CD14-positive monocyte (primary cell): ENCODE measurements at regions of chr2 and their contacts with region 1.

Region 1: DNA sequence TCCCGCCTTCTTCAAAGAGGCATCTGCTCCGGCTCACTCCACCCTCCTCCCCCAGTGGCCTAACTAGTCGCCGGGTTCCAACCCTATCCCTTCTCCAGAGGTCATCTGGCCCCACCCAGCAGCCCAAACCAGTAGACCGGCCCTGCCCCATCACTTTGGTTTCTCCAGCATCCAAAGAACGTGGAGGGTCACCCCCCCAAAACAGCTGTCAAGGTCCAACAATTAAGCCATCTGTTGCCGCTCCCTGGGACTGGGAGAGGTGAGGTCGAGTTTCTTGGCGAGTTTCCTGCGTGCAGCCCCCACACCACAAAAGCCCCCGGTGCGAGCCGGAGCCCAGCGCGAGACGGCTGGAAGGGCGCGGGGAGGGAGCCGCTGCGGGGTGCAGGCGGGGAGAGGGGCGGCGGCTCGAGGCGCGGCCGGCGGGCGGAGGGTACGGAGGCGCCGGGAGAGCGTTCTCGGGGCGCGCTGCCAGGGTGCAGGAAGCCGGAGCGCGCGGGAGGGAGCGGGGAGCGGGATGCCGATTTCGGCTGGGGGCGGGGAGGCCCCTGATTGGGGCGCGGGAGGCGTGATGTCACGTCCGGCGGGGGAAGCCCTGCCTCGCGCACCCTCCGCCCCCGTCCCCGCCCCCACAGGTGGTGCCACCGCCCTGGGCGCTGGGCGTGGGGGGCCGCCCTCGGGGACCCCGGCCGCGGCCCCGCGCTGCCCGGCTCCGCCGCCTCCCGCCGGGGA is 571 bp upstream of the GPC1 start:
- DNase-seq: peak; percentile 10 to 24 (median 14)
- H3K4me3 ChIP-seq: peak overlapping the region in 1 of 3 experiments; percentile 60
- H3K4me3 Mint-ChIP-seq: peak overlapping the region; percentile 75 to 87
- H3K27ac ChIP-seq: no peak overlapping the region
- H3K27ac Mint-ChIP-seq: peak overlapping the region in 1 of 7 donors; percentile 46
- H3K4me1 ChIP-seq: peaks cover 0 to 17% of the 10 kb centered on the region in 2 donors
- H3K4me1 Mint-ChIP-seq: peaks cover 7% of the 10 kb centered on the region
- H3K27me3 ChIP-seq: peaks cover 19 to 39% of the 10 kb centered on the region in 2 donors
- H3K27me3 Mint-ChIP-seq: peaks cover 34 to 65% (median 49%) of the 10 kb centered on the region in 3 donors
- CTCF ChIP-seq: no peak

Region 2: DNA sequence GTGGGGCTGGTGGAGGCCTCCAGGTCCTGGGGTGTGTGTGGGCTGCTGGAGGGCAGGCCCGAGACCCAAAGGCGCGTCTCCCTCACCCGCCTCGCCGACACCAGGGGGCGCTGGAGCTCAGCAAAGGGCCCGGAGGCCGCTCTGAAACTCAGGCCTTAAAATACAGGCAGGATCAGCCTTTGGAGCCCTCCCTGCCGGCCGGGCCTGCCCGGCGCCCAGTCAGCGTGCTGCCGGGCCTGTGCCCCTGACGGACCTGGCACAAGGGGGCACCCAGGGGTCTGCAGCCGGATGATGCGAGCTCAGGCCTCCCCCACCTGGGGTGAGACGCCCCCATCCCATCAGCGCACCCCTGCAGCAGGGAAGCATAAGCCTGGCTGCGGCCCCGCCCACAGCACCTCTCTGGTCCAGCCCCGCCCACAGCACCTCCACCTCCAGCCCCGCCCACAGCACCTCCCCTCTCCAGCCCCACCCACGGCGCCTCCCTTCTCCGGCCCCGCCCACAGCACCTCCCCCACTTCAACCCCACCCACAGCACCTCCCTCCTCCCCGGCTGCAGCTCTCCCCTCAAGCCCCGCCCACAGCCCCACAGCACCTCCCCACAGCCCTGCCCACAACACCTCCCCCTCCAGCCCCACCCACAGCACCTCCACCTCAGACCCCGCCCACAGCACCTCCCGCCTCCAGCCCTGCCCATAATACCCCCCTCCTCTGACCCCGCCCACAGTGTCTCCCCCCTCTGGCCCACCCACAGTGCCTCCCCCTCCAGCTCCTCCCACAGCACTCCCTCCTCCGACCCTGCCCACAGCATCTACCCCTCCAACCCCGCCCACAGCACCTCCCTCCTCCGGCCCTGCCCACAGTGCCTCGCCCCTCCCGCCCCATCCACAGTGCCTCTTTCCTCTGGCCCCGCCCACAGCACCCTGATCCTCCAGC is 201.7 kb before region 1 on chr2:
- intact Hi-C with region 1: loop called in 1 of 2 experiments (anchors 10 kb)
- DNase-seq: no peak
- H3K4me3 ChIP-seq: peak overlapping the region in 1 of 3 experiments; percentile 48
- H3K4me3 Mint-ChIP-seq: peak overlapping the region in 1 of 2 donors; percentile 26
- H3K27ac ChIP-seq: no peak overlapping the region
- H3K27ac Mint-ChIP-seq: no peak overlapping the region
- H3K4me1 ChIP-seq: peaks cover 4 to 6% of the 10 kb centered on the region in 2 donors
- H3K4me1 Mint-ChIP-seq: peaks cover 2% of the 10 kb centered on the region
- H3K27me3 ChIP-seq: peaks cover 0 to 2% of the 10 kb centered on the region in 2 donors
- H3K27me3 Mint-ChIP-seq: peaks cover 7 to 13% (median 10%) of the 10 kb centered on the region in 3 donors
- CTCF ChIP-seq: peak; percentile 61